ENCODE measurements at regions of chr5 and their contacts with region 1.

Region 1: DNA sequence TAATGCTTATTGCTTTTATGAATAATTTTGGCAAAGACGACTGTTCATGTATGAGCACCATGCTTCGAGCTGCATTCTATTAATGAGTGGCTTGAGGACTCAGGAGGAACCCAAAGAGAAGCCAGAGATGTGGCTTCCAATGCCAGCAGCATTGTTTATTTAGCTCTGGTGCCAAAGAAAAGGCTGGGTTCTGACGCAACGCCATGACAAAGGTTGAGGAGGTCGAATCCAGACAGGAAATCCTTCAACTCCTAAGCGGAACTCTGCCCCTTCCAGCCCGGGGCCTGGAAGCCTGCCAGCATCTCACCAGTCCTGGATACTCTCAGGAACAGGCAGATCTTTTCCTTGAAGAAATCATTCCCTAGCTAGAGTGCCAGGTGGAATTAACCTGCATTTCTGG is 104.4 kb downstream of the ARHGAP26 start:
- DNase-seq: no peak
- ATAC-seq: no peak
- H3K4me3 ChIP-seq: no peak overlapping the region
- H3K27ac ChIP-seq: no peak overlapping the region
- H3K4me1 ChIP-seq: no peaks in the 10 kb centered on the region
- H3K27me3 ChIP-seq: peaks cover 8 to 26% of the 10 kb centered on the region in 2 experiments; a peak in 4 of 5 replicates
- CTCF ChIP-seq: no peak
- EP300 ChIP-seq: no peak
- POLR2A ChIP-seq: no peak
- RAD21 ChIP-seq: no peak

Region 2: GRCh38 chr5:142713121-142713706 is 161.3 kb before region 1 on chr5:
- CTCF ChIA-PET with region 1: no interaction called
- POLR2A ChIA-PET with region 1: no interaction called
- in situ Hi-C with region 1: no loop called
- intact Hi-C with region 1: loop called (anchors 5 kb)
- DNase-seq: peak; percentile 78 to 87 (median 86)
- ATAC-seq: peak; percentile 99
- H3K4me3 ChIP-seq: peak overlapping the region; percentile 48
- H3K27ac ChIP-seq: no peak overlapping the region; the same call in 2 of the 3 replicates
- H3K4me1 ChIP-seq: peaks cover 0 to 4% of the 10 kb centered on the region in 2 experiments; a peak in 2 of 5 replicates
- H3K27me3 ChIP-seq: peaks cover 3 to 10% of the 10 kb centered on the region in 2 experiments; a peak in 3 of 5 replicates
- CTCF ChIP-seq: peak; percentile 80 to 95 (median 94)
- EP300 ChIP-seq: no peak
- POLR2A ChIP-seq: no peak
- RAD21 ChIP-seq: peak; percentile 67 to 70

Region 3: GRCh38 chr5:142720641-142721271 is 153.8 kb before region 1 on chr5:
- CTCF ChIA-PET with region 1: no interaction called
- POLR2A ChIA-PET with region 1: no interaction called
- in situ Hi-C with region 1: loop called (anchors 5 kb)
- intact Hi-C with region 1: loop called (anchors 5 kb)
- DNase-seq: no peak
- ATAC-seq: no peak
- H3K4me3 ChIP-seq: no peak overlapping the region
- H3K27ac ChIP-seq: no peak overlapping the region
- H3K4me1 ChIP-seq: no peaks in the 10 kb centered on the region; a peak in 1 of 5 replicates
- H3K27me3 ChIP-seq: peaks cover 15 to 53% of the 10 kb centered on the region in 2 experiments
- CTCF ChIP-seq: no peak
- EP300 ChIP-seq: no peak
- POLR2A ChIP-seq: no peak
- RAD21 ChIP-seq: no peak

Region 4: DNA sequence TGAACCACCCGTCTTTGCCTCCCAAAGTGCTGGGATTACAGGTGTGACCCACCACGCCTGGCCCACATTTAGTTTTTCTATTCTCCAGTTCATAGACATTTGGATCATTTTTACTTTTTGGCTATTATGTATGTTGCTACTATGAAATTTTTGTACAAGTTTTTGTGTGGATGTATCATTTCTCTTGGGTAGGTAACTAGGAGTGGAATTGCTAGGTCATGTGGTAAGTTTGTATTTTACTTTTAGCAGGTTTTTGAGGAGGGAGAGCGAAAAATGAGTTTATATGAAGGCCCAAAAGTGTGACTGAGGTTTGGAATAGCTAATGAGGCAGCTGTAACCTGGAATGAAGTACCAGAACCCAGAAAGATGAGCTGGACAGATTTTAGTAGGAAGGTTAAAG is 69.2 kb before region 1 on chr5:
- CTCF ChIA-PET with region 1: no interaction called
- POLR2A ChIA-PET with region 1: no interaction called
- in situ Hi-C with region 1: no loop called
- intact Hi-C with region 1: no loop called
- DNase-seq: no peak
- ATAC-seq: no peak
- H3K4me3 ChIP-seq: no peak overlapping the region
- H3K27ac ChIP-seq: no peak overlapping the region
- H3K4me1 ChIP-seq: no peaks in the 10 kb centered on the region
- H3K27me3 ChIP-seq: peaks cover 20 to 33% of the 10 kb centered on the region in 2 experiments; a peak in 4 of 5 replicates
- CTCF ChIP-seq: no peak
- EP300 ChIP-seq: no peak
- POLR2A ChIP-seq: no peak
- RAD21 ChIP-seq: no peak

Measured in K562 (cell line).